Activated CD4-positive, alpha-beta T cell treated with anti-CD3 and anti-CD28 coated beads for 36 hours (primary cell): ENCODE measurements at regions of chr11 and their contacts with region 1.

Region 1: DNA sequence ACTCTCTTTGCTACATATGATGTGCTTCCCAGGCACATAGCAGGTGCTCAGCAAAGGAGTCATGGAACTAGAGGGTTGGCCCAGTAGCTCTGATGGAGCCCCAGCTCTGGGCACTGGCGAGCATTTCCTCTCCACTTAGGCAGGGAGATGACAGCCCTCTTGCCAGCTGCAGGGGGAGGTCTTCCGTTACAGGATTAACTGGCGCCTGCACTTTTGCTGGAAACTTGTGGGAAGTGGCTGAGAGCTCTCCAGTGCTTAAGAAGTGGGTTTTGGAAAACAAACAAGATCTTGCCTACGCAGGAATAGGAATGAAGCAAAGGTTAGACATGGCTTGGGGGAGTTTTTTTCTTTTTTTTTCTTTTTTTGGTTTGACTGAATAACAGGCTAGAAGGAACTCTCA is 75.5 kb downstream of the MICAL2 start:
- DNase-seq: no peak
- ATAC-seq: no peak
- H3K4me3 Mint-ChIP-seq: no peak overlapping the region
- H3K27ac Mint-ChIP-seq: peak overlapping the region; percentile 43
- H3K4me1 Mint-ChIP-seq: peaks cover 47% of the 10 kb centered on the region
- H3K27me3 Mint-ChIP-seq: no peaks in the 10 kb centered on the region

Region 2: DNA sequence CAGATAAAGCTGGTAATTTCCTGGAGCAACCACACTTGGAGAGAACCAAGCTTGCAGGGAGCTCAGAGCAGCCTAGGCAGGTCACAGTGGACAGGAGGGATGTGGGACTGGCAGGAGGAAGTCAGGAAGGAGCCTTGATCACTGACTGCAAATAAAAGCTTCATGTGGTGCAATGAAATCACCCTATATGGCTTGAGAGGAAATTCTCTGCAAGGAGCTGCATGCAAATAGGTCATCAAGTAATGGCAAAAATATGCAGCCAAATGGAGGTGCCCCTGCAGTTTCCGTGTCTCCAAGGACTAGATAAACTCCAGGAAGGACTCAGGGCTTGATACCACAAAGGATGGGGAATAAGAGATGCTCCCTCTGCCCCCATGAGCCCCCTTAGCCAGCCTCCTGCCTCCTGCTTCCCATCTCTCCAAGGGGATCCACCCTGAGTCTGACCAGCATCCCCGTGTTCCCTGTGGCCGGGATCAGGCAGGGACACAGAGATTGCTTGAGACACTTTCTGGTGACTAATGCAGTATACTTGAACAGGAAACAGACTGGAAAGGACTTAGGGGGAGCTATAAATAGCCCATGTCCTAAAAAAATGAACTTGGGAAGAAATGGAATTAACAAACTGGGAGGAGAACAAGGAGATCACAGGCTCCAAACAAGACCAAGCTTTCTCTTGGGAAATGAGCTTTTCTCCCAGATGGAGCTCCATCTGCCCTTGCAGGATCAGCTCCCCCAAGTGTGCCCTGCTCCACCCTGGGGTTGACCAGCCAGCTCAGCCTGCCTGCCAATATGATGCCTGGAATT is 99.4 kb before region 1 on chr11:
- CTCF ChIA-PET with region 1: no interaction called
- POLR2A ChIA-PET with region 1: no interaction called
- intact Hi-C with region 1: no loop called
- DNase-seq: no peak
- ATAC-seq: no peak
- H3K4me3 Mint-ChIP-seq: no peak overlapping the region
- H3K27ac Mint-ChIP-seq: peak overlapping the region; percentile 56
- H3K4me1 Mint-ChIP-seq: peaks cover 55% of the 10 kb centered on the region
- H3K27me3 Mint-ChIP-seq: no peaks in the 10 kb centered on the region

Region 3: DNA sequence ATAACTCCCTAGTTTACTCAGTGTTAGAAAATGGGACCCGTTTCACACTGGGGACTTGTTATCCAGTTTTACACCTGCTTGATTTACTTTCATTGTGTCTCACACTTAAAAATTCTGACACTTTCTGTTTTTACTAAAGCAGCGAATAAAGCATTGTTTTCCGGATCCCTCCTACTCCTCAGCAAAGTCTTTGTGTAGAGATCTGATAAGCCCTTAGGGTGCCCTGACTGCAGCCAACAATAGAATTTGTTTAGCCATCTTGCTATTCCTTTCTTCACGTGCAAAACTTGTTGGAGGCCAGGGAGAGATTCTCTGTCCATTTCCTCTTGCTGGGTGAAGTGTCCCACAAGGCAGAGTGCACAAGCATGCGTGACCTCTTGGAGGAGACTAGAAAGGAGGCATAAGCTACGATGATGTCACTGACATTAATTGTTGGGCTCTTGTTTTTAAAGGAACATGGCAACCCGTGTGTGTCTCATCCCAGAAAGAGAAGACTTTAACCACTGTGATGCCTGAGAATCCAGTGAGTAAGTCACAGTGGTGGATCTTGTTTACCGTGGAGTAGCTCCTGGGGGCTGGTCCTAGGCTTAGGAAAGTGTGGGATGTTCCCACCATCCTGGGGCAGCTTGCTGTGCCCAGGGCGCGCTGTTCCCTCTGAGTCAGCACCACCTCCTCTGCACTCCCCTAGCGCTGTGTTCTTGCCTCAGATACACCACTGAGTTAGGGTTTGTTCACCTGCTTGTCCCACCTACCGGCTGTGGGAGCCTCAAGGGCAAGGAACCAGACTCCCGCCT is 47.8 kb before region 1 on chr11:
- CTCF ChIA-PET with region 1: no interaction called
- POLR2A ChIA-PET with region 1: interaction called, 11 read pairs
- intact Hi-C with region 1: no loop called
- DNase-seq: no peak
- ATAC-seq: peak; percentile 54
- H3K4me3 Mint-ChIP-seq: no peak overlapping the region
- H3K27ac Mint-ChIP-seq: peak overlapping the region; percentile 86
- H3K4me1 Mint-ChIP-seq: peaks cover 75% of the 10 kb centered on the region
- H3K27me3 Mint-ChIP-seq: no peaks in the 10 kb centered on the region

Region 4: GRCh38 chr11:12174477-12175143 is 11.3 kb before region 1 on chr11:
- CTCF ChIA-PET with region 1: interaction called, 7 read pairs
- POLR2A ChIA-PET with region 1: interaction called, 15 read pairs
- intact Hi-C with region 1: loop called (anchors 1 kb)
- DNase-seq: no peak
- ATAC-seq: peak; percentile 59
- H3K4me3 Mint-ChIP-seq: peak overlapping the region; percentile 47
- H3K27ac Mint-ChIP-seq: peak overlapping the region; percentile 94
- H3K4me1 Mint-ChIP-seq: peaks cover 69% of the 10 kb centered on the region
- H3K27me3 Mint-ChIP-seq: no peaks in the 10 kb centered on the region

Region 5: DNA sequence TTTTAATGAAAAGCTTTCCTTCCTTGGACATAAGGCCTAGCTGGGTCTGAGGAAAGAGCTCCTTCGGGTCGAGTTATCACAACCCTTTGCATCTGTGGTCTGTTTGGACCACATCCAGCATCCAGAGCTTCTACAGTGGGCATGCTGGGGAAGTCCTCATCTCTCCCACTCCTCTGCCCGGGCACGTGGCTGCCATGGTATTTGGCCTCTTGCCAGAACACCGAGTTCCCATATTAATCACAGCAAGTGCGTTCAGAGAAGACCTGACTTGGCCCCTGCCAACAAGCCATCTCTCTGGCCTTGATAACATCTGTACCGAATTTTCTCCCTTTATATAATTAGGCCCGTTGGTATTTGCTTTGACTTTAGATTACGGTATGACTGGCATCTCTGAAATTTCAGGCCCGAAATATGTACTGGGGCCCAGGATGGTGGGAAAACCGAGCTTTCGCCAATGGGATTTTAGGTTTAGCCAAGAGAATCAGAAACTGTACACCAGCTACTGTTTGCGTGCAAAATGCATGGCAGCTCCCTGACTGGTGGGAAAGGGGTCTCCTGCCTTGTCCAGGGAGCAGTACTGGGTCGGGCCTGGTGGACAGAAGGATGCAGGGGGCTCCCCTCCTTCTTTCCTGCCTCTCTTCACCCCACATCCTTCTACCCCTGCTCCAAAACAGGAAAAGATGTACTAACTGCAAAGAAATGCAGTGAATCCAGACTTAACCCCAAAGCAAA is 14.5 kb after region 1 on chr11:
- CTCF ChIA-PET with region 1: interaction called, 18 read pairs
- POLR2A ChIA-PET with region 1: interaction called, 6 read pairs
- intact Hi-C with region 1: no loop called
- DNase-seq: peak; percentile 72
- ATAC-seq: no peak
- H3K4me3 Mint-ChIP-seq: peak overlapping the region; percentile 82
- H3K27ac Mint-ChIP-seq: peak overlapping the region; percentile 71
- H3K4me1 Mint-ChIP-seq: peaks cover 90% of the 10 kb centered on the region
- H3K27me3 Mint-ChIP-seq: no peaks in the 10 kb centered on the region

Region 6: GRCh38 chr11:12207384-12208150 is 21.7 kb after region 1 on chr11:
- CTCF ChIA-PET with region 1: interaction called, 14 read pairs
- POLR2A ChIA-PET with region 1: interaction called, 3 read pairs
- intact Hi-C with region 1: loop called (anchors 1 kb)
- DNase-seq: peak; percentile 80
- ATAC-seq: peak; percentile 85
- H3K4me3 Mint-ChIP-seq: peak overlapping the region; percentile 50
- H3K27ac Mint-ChIP-seq: peak overlapping the region; percentile 92
- H3K4me1 Mint-ChIP-seq: peaks cover 69% of the 10 kb centered on the region
- H3K27me3 Mint-ChIP-seq: no peaks in the 10 kb centered on the region

Region 7: GRCh38 chr11:12224537-12224893 is 38.6 kb after region 1 on chr11:
- CTCF ChIA-PET with region 1: interaction called, 12 read pairs
- POLR2A ChIA-PET with region 1: interaction called, 4 read pairs
- intact Hi-C with region 1: no loop called
- DNase-seq: peak; percentile 96
- ATAC-seq: peak; percentile 97
- H3K4me3 Mint-ChIP-seq: peak overlapping the region; percentile 74
- H3K27ac Mint-ChIP-seq: peak overlapping the region; percentile 93
- H3K4me1 Mint-ChIP-seq: peaks cover 48% of the 10 kb centered on the region
- H3K27me3 Mint-ChIP-seq: no peaks in the 10 kb centered on the region